K562 (cell line): ENCODE measurements at regions of chr9 and their contacts with region 1.

Region 1: DNA sequence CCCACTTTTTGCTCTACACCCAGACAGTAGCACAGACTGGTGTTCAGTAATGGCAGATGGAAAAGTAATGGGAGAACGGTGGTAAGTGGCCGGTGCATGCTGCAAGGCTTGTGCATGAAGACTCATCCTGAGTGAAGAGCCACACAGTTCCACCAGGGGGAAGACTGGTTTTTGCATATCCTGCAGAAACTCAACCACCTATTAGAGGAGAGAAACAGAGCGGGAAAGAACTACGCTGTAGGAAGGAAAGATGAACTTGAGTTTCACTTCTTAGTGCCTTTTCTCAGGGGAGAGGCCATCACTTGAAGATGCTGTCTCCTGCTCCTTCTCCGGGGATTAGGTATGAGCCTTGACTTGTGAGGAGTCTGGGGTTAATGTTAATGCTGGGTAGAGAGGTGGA is 9.4 kb upstream of the PRSS3 start:
- DNase-seq: peak in 2 of 4 experiments; percentile 8 to 45
- ATAC-seq: peak; percentile 97
- H3K4me3 ChIP-seq: no peak overlapping the region
- H3K27ac ChIP-seq: no peak overlapping the region
- H3K4me1 ChIP-seq: peaks cover 0 to under 1% of the 10 kb centered on the region in 2 experiments; a peak in 2 of 5 replicates
- H3K27me3 ChIP-seq: peaks cover 0 to 4% of the 10 kb centered on the region in 2 experiments; a peak in 1 of 5 replicates
- CTCF ChIP-seq: peak; percentile 36 to 55 (median 51); a peak in 5 of 6 replicates
- EP300 ChIP-seq: no peak
- POLR2A ChIP-seq: no peak
- RAD21 ChIP-seq: peak in 1 of 2 experiments; percentile 60; a peak in 2 of 4 replicates

Region 2: GRCh38 chr9:33852216-33852826 is 66.4 kb after region 1 on chr9:
- CTCF ChIA-PET with region 1: interaction called, 6 read pairs
- POLR2A ChIA-PET with region 1: no interaction called
- in situ Hi-C with region 1: no loop called
- intact Hi-C with region 1: loop called (anchors 10 kb)
- DNase-seq: peak in 2 of 4 experiments; percentile 19 to 54
- ATAC-seq: peak; percentile 79
- H3K4me3 ChIP-seq: no peak overlapping the region
- H3K27ac ChIP-seq: no peak overlapping the region
- H3K4me1 ChIP-seq: peaks cover 0 to 2% of the 10 kb centered on the region in 2 experiments; a peak in 2 of 5 replicates
- H3K27me3 ChIP-seq: no peaks in the 10 kb centered on the region
- CTCF ChIP-seq: peak; percentile 49 to 75 (median 68)
- EP300 ChIP-seq: no peak
- POLR2A ChIP-seq: no peak
- RAD21 ChIP-seq: peak; percentile 53 to 68